AG04449 (cell line): ENCODE measurements at regions of chr20 and their contacts with region 1.

Region 1: GRCh38 chr20:41232973-41233926 is 84.3 kb downstream of the ZHX3 start:
- DNase-seq: peak; percentile 77
- H3K4me3 ChIP-seq: peak overlapping the region; percentile 23
- CTCF ChIP-seq: no peak

Region 2: GRCh38 chr20:40628877-40629276 is 604.4 kb before region 1 on chr20:
- CTCF ChIA-PET with region 1: no interaction called
- POLR2A ChIA-PET with region 1: no interaction called
- DNase-seq: no peak
- H3K4me3 ChIP-seq: no peak overlapping the region
- CTCF ChIP-seq: no peak

Region 3: GRCh38 chr20:41078329-41078728 is 154.9 kb before region 1 on chr20:
- CTCF ChIA-PET with region 1: no interaction called
- POLR2A ChIA-PET with region 1: no interaction called
- DNase-seq: peak; percentile 33
- H3K4me3 ChIP-seq: no peak overlapping the region
- CTCF ChIP-seq: peak; percentile 37

Region 4: DNA sequence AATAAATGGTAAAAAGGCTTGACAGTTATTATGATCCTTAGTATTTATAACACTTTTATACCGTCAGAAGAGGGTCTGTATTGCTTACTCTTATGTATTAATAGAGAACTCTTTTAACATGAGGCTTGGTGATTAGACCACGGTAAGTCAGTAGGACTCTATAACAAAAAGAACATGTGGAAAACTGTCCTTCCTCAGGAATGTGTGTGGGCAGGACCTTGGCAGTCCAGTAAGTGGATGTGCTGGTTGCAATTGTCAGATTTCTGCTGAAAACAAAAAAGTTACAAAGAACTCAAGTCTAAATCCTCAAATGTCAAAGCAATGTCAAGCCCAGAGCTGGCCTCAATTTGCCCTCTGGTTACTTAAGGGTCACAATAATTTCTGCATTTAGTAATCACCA is 14.8 kb before region 1 on chr20:
- CTCF ChIA-PET with region 1: interaction called, 27 read pairs
- POLR2A ChIA-PET with region 1: interaction called, 3 read pairs
- DNase-seq: no peak
- H3K4me3 ChIP-seq: no peak overlapping the region
- CTCF ChIP-seq: no peak

Region 5: GRCh38 chr20:41249406-41250281 is 16.4 kb after region 1 on chr20:
- CTCF ChIA-PET with region 1: interaction called, 83 read pairs
- POLR2A ChIA-PET with region 1: no interaction called
- DNase-seq: peak; percentile 50
- H3K4me3 ChIP-seq: no peak overlapping the region
- CTCF ChIP-seq: peak; percentile 20

Region 6: GRCh38 chr20:41329435-41330342 is 96.4 kb after region 1 on chr20:
- CTCF ChIA-PET with region 1: interaction called, 15 read pairs
- POLR2A ChIA-PET with region 1: interaction called, 6 read pairs
- DNase-seq: peak; percentile 98
- H3K4me3 ChIP-seq: no peak overlapping the region
- CTCF ChIP-seq: no peak